Activated B cell treated with CpG ODN at 0.5 μM for 24 hours (primary cell): ENCODE measurements at regions of chr6 and their contacts with region 1.

Region 1: GRCh38 chr6:108558372-108559096 is 2.2 kb upstream of the FOXO3 start:
- DNase-seq: peak; percentile 93
- ATAC-seq: peak; percentile 65
- H3K4me3 Mint-ChIP-seq: peak overlapping the region; percentile 95
- H3K27ac Mint-ChIP-seq: peak overlapping the region; percentile 97
- H3K4me1 Mint-ChIP-seq: peaks cover 24% of the 10 kb centered on the region
- H3K27me3 Mint-ChIP-seq: peaks cover 8% of the 10 kb centered on the region
- CTCF ChIP-seq: no peak

Region 2: GRCh38 chr6:108541838-108542759 is 16.4 kb before region 1 on chr6:
- CTCF ChIA-PET with region 1: interaction called, 10 read pairs
- POLR2A ChIA-PET with region 1: interaction called, 6 read pairs
- intact Hi-C with region 1: no loop called
- DNase-seq: peak; percentile 34
- ATAC-seq: peak; percentile 84
- H3K4me3 Mint-ChIP-seq: peak overlapping the region; percentile 41
- H3K27ac Mint-ChIP-seq: no peak overlapping the region
- H3K4me1 Mint-ChIP-seq: peaks cover 15% of the 10 kb centered on the region
- H3K27me3 Mint-ChIP-seq: peaks cover 7% of the 10 kb centered on the region
- CTCF ChIP-seq: peak; percentile 39

Region 3: GRCh38 chr6:108848116-108848868 is 289.8 kb after region 1 on chr6 and contains the start of gene ARMC2:
- CTCF ChIA-PET with region 1: no interaction called
- POLR2A ChIA-PET with region 1: interaction called, 6 read pairs
- intact Hi-C with region 1: loop called (anchors 1 kb)
- DNase-seq: peak; percentile 98
- ATAC-seq: peak; percentile 94
- H3K4me3 Mint-ChIP-seq: peak within 1 kb of the TSS; percentile 86
- H3K27ac Mint-ChIP-seq: peak within 1 kb of the TSS; percentile 83
- H3K4me1 Mint-ChIP-seq: peaks cover 14% of the 10 kb centered on the region
- H3K27me3 Mint-ChIP-seq: peaks cover under 1% of the 10 kb centered on the region
- CTCF ChIP-seq: no peak
- total RNA-seq, gene ARMC2: 3.5 and 4.3 TPM in 2 replicates

Region 4: DNA sequence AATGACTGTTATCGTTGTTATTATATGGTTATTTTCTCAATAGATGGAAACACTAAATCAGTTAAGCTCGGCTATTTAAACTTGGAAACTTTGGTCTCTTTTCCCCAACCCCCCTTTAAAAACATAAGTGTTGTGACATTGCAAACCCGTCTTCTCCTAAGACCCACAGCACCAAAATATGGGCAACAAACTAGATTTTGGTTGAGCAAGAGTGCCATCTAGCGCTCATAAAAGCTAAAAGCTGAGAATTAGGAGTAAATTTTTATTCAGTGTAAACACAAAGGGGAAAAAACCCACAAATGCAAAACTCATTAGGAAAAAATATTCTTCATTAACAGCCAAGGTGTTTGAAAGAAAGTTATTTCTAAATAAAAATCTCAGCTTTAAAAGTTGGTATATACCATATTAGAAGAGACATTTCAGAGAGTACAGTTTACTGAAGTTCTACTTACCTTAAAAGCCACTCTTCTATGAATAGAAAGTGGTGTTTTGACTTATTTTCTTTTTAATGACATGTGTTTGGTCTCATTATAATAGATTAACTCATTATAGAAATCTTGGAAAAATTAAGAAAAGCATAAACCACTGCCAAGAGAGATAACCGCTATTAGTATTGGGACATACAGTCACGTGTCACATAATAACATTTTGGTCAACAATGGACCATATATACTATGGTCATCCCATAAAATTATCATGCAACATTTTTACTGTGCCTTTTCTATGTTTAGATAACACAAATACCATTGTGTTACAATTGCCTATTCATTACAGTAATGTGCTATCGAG is 515.0 kb after region 1 on chr6:
- CTCF ChIA-PET with region 1: interaction called, 6 read pairs
- POLR2A ChIA-PET with region 1: interaction called, 4 read pairs
- intact Hi-C with region 1: loop called (anchors 5 kb)
- DNase-seq: no peak
- ATAC-seq: no peak
- H3K4me3 Mint-ChIP-seq: no peak overlapping the region
- H3K27ac Mint-ChIP-seq: no peak overlapping the region
- H3K4me1 Mint-ChIP-seq: peaks cover 5% of the 10 kb centered on the region
- H3K27me3 Mint-ChIP-seq: no peaks in the 10 kb centered on the region
- CTCF ChIP-seq: peak; percentile 89

Region 5: GRCh38 chr6:109455502-109456282 is 897.2 kb after region 1 on chr6 and contains the start of gene MICAL1:
- CTCF ChIA-PET with region 1: no interaction called
- POLR2A ChIA-PET with region 1: interaction called, 4 read pairs
- intact Hi-C with region 1: loop called (anchors 2 kb)
- DNase-seq: peak; percentile 82
- ATAC-seq: peak; percentile 58
- H3K4me3 Mint-ChIP-seq: peak within 1 kb of the TSS; percentile 97
- H3K27ac Mint-ChIP-seq: peak within 1 kb of the TSS; percentile 98
- H3K4me1 Mint-ChIP-seq: peaks cover 80% of the 10 kb centered on the region
- H3K27me3 Mint-ChIP-seq: no peaks in the 10 kb centered on the region
- CTCF ChIP-seq: no peak
- total RNA-seq, gene MICAL1: 104 and 120 TPM in 2 replicates

Region 6: GRCh38 chr6:109690737-109691621 is 1132.4 kb after region 1 on chr6 and contains the starts of genes AK9 and FIG4:
- CTCF ChIA-PET with region 1: no interaction called
- POLR2A ChIA-PET with region 1: no interaction called
- intact Hi-C with region 1: loop called (anchors 5 kb)
- DNase-seq: peak; percentile 88
- ATAC-seq: peak; percentile 93
- H3K4me3 Mint-ChIP-seq: peak within 1 kb of the TSS; percentile 94
- H3K27ac Mint-ChIP-seq: peak within 1 kb of the TSS; percentile 95
- H3K4me1 Mint-ChIP-seq: peaks cover 42% of the 10 kb centered on the region
- H3K27me3 Mint-ChIP-seq: no peaks in the 10 kb centered on the region
- CTCF ChIP-seq: no peak
- total RNA-seq, gene AK9: 9.1 and 10.6 TPM in 2 replicates
- total RNA-seq, gene FIG4: 19.8 and 21.8 TPM in 2 replicates